ENCODE measurements at regions of chr10 and their contacts with region 1.

Region 1: GRCh38 chr10:119761106-119761505 is 35.3 kb downstream of the INPP5F start:
- DNase-seq: no peak
- ATAC-seq: peak; percentile 48
- H3K4me3 ChIP-seq: no peak overlapping the region
- H3K27ac ChIP-seq: no peak overlapping the region
- H3K4me1 ChIP-seq: no peaks in the 10 kb centered on the region
- H3K27me3 ChIP-seq: no peaks in the 10 kb centered on the region

Region 2: DNA sequence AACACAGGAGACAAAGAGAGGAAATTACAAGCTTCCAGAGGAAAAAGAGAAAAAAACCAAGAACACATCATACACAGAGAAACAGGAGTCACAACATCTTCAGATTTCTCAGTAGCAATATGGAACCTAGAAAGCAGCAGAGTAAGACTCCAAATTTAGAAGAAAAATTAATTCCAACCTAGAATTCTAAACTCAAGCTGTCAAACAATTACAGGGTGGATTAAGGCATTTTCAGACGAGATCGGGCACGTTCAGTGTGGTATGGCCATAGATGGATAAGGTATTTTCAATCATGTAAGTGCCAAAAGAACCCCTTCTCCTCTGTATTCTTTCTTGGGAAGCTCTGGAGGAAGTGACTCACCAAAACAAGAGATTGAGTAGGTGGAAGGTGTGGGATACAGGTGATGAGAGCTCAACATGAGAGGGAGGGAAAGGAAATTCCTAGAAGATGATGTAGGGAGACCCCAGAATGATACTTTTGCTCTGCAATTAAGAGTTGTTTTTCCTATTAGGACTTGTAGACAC is 1470.6 kb before region 1 on chr10:
- intact Hi-C with region 1: no loop called
- DNase-seq: no peak
- ATAC-seq: no peak
- H3K4me3 ChIP-seq: no peak overlapping the region
- H3K27ac ChIP-seq: no peak overlapping the region
- H3K4me1 ChIP-seq: no peaks in the 10 kb centered on the region
- H3K27me3 ChIP-seq: no peaks in the 10 kb centered on the region

Region 3: DNA sequence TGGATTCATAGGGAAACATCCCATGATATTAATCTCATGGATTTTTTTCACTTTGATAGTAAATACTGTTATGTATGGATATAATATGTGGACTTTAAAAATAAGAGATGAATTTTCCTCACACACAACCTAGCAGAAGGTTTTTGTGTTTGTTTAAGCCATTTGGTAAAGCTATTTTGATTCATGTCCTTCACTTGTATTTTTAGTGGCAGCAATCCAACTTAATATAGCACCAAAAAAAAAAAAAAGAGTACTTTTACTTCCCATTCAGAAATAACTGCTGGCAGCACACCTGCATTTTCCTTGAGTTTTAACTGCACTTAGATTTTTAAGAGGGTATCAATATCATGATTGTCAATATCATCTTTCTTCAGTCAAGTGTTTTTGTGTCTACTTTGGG is 51.6 kb after region 1 on chr10:
- intact Hi-C with region 1: loop called in 1 of 2 experiments (anchors 5 kb)
- DNase-seq: no peak
- ATAC-seq: no peak
- H3K4me3 ChIP-seq: no peak overlapping the region
- H3K27ac ChIP-seq: no peak overlapping the region
- H3K4me1 ChIP-seq: no peaks in the 10 kb centered on the region
- H3K27me3 ChIP-seq: no peaks in the 10 kb centered on the region